ENCODE measurements at regions of chr1 and their contacts with region 1.

Region 1: DNA sequence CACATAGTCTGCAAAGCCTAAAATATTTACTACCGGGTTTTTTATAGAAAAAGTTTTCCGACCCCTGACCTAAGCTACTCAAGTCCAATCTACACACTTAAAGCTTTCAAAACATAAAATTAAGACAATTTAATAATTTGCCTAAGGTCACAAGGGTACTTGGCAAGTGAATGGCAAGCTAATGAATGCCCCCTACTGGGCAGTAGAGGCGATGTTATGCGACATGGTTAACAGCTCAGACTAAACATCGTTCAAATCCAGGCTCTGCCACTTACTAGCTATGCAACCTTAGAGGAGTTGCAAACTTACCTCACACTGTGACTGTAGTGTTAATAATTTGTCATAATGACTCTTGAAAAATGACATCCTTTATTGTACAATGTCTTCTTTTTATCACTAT is 317.2 kb upstream of the NFIA start:
- DNase-seq: no peak
- ATAC-seq: peak; percentile 39

Region 2: GRCh38 chr1:60281360-60281932 is 483.8 kb before region 1 on chr1:
- intact Hi-C with region 1: loop called (anchors 5 kb)
- DNase-seq: peak; percentile 55
- ATAC-seq: peak; percentile 92